ENCODE measurements at regions of chr7 and their contacts with region 1.

Region 1: GRCh38 chr7:65307651-65308299 is 65.9 kb upstream of the ZNF92 start:
- DNase-seq: peak; percentile 47 to 72
- H3K4me3 ChIP-seq: no peak overlapping the region
- H3K27ac ChIP-seq: no peak overlapping the region
- H3K4me1 ChIP-seq: no peaks in the 10 kb centered on the region
- H3K27me3 ChIP-seq: no peaks in the 10 kb centered on the region
- CTCF ChIP-seq: peak; percentile 30 to 95 (median 89)
- EP300 ChIP-seq: no peak; a peak in 1 of 3 replicates
- POLR2A ChIP-seq: no peak
- RAD21 ChIP-seq: peak; percentile 95 to 98

Region 2: DNA sequence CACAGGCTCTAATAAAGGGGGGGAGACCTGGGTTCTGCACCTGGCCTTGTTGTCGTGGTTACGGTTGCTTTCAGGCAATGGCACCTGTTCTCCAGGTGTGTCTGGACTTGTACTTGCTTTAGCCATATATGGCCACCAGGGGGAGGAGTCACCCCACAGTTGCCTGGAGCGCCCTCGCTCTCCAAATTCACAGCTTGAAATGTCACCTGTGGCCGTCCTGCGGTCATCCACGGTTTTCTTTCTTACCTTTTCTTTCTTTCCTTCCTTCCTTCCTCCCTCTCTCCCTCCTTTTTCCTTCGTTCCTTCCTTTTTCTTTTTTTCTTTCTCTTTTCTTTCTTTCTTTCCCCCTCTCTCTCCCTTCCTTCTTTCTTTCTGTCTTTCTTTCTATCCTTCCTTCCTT is 91.3 kb before region 1 on chr7:
- CTCF ChIA-PET with region 1: interaction called, 23 read pairs
- POLR2A ChIA-PET with region 1: interaction called, 3 read pairs
- DNase-seq: peak; percentile 63 to 77
- H3K4me3 ChIP-seq: no peak overlapping the region
- H3K27ac ChIP-seq: no peak overlapping the region
- H3K4me1 ChIP-seq: no peaks in the 10 kb centered on the region
- H3K27me3 ChIP-seq: no peaks in the 10 kb centered on the region
- CTCF ChIP-seq: peak; percentile 68 to 79 (median 74)
- EP300 ChIP-seq: no peak
- POLR2A ChIP-seq: no peak
- RAD21 ChIP-seq: peak; percentile 87 to 94

Region 3: DNA sequence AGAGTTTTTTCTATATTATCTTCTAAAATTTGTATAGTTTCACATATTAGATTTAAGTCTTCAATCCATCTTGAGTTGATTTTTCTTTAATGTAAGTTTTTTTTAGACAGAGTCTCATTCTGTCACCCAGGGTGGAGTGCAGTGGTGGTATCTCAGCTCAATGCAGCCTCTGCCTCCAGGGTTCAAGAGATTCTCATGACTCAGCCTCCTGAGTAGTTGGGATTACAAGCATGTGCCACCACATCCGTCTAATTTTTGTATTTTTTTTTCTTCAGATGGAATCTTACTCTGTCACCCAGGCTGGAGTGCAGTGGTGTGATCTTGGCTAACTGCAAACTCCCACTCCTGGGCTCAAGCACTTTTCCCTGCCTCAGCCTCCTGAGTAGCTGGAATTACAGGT is 77.5 kb before region 1 on chr7:
- CTCF ChIA-PET with region 1: interaction called, 14 read pairs
- POLR2A ChIA-PET with region 1: no interaction called
- DNase-seq: no peak
- H3K4me3 ChIP-seq: no peak overlapping the region
- H3K27ac ChIP-seq: no peak overlapping the region
- H3K4me1 ChIP-seq: peaks cover 0 to 3% (median 0%) of the 10 kb centered on the region in 4 experiments; a peak in 2 of 7 replicates
- H3K27me3 ChIP-seq: no peaks in the 10 kb centered on the region
- CTCF ChIP-seq: no peak
- EP300 ChIP-seq: no peak
- POLR2A ChIP-seq: no peak
- RAD21 ChIP-seq: no peak

Region 4: GRCh38 chr7:65251851-65252620 is 55.7 kb before region 1 on chr7:
- CTCF ChIA-PET with region 1: interaction called, 18 read pairs
- POLR2A ChIA-PET with region 1: no interaction called
- DNase-seq: peak; percentile 85 to 93
- H3K4me3 ChIP-seq: peak overlapping the region; percentile 66 to 78 (median 70)
- H3K27ac ChIP-seq: no peak overlapping the region
- H3K4me1 ChIP-seq: peaks cover 0 to 8% (median 3%) of the 10 kb centered on the region in 4 experiments; a peak in 5 of 7 replicates
- H3K27me3 ChIP-seq: no peaks in the 10 kb centered on the region
- CTCF ChIP-seq: no peak
- EP300 ChIP-seq: peak in 1 of 2 experiments; percentile 71; a peak in 1 of 3 replicates
- POLR2A ChIP-seq: peak in 1 of 2 experiments; percentile 64; a peak in 2 of 3 replicates
- RAD21 ChIP-seq: no peak

Region 5: GRCh38 chr7:65264258-65264657 is 43.5 kb before region 1 on chr7:
- CTCF ChIA-PET with region 1: interaction called, 13 read pairs
- POLR2A ChIA-PET with region 1: interaction called, 3 read pairs
- DNase-seq: peak in 1 of 2 experiments; percentile 39
- H3K4me3 ChIP-seq: no peak overlapping the region
- H3K27ac ChIP-seq: no peak overlapping the region
- H3K4me1 ChIP-seq: peaks cover 0 to 11% (median 4%) of the 10 kb centered on the region in 4 experiments; a peak in 4 of 7 replicates
- H3K27me3 ChIP-seq: peaks cover 0 to 2% (median 0%) of the 10 kb centered on the region in 4 experiments; a peak in 1 of 7 replicates
- CTCF ChIP-seq: no peak
- EP300 ChIP-seq: no peak
- POLR2A ChIP-seq: no peak
- RAD21 ChIP-seq: no peak